Right cardiac atrium (tissue), 5 donors: ENCODE measurements at regions of chr2 and their contacts with region 1.

Region 1: GRCh38 chr2:80326214-80326613 is 21.7 kb upstream of the LRRTM1 start:
- DNase-seq: peak in 1 of 3 donors; percentile 52
- ATAC-seq: peak; percentile 41 to 55
- H3K4me3 ChIP-seq: no peak overlapping the region
- H3K27ac ChIP-seq: no peak overlapping the region
- H3K4me1 ChIP-seq: no peaks in the 10 kb centered on the region
- H3K27me3 ChIP-seq: no peaks in the 10 kb centered on the region

Region 2: GRCh38 chr2:79771493-79771892 is 554.7 kb before region 1 on chr2:
- intact Hi-C with region 1: no loop called
- DNase-seq: no peak
- ATAC-seq: no peak
- H3K4me3 ChIP-seq: no peak overlapping the region
- H3K27ac ChIP-seq: no peak overlapping the region
- H3K4me1 ChIP-seq: no peaks in the 10 kb centered on the region
- H3K27me3 ChIP-seq: no peaks in the 10 kb centered on the region

Region 3: DNA sequence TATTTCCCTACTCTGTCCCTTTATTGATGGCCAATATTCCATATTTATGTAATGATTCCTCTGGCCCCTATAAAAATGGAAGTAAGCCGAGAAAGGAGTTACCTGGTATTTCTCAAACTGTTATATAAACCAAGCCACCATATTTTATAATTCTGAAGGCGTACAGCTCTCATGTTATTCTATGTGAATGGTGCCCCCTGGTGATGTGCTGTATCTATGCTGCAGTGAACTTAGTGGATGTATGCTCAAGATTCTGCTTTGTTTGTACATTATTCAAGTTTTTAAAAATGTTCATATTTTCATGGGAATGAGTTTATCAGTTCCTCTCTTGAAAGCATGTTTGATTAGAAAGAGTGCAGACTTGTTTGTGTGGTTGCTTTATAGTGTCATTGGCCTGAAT is 172.9 kb after region 1 on chr2:
- intact Hi-C with region 1: loop called (anchors 2 to 5 kb)
- DNase-seq: peak; percentile 24 to 68 (median 24)
- ATAC-seq: peak; percentile 49 to 66
- H3K4me3 ChIP-seq: no peak overlapping the region
- H3K27ac ChIP-seq: no peak overlapping the region
- H3K4me1 ChIP-seq: no peaks in the 10 kb centered on the region
- H3K27me3 ChIP-seq: no peaks in the 10 kb centered on the region